Esophagus muscularis mucosa (tissue), 4 donors: ENCODE measurements at regions of chr6 and their contacts with region 1.

Region 1: DNA sequence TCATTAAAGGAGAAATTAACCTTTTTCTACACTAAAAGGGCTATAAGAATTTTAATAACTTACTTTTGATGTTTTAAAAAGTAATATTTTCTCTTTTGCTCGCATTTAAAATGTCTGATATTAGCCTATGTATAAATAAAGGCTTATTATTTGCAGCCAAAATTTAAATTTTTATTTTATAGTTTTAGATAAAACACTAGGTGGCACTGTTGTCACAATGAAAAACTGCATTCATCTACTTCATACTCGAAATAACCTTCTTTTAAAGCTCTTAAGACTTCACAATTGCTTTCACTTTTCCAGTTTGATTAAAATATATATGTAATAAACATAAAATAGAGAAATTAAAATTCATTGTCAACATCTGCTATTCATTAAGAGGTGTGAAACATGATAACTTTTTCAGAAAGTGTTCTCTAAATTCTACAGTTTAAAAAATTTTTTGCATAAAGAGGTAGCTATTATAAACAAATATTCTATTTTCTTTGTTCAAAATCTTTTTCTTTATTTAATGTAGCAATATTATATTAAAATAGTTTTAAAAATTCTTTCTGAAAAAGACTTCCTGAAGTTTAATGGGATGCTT is 78.8 kb upstream of the DEFB112 start:
- DNase-seq: no peak
- H3K4me3 ChIP-seq: no peak overlapping the region
- H3K27ac ChIP-seq: no peak overlapping the region
- H3K4me1 ChIP-seq: no peaks in the 10 kb centered on the region
- H3K27me3 ChIP-seq: no peaks in the 10 kb centered on the region
- CTCF ChIP-seq: peak; percentile 19 to 49 (median 48)
- EP300 ChIP-seq: no peak
- POLR2A ChIP-seq: no peak

Region 2: DNA sequence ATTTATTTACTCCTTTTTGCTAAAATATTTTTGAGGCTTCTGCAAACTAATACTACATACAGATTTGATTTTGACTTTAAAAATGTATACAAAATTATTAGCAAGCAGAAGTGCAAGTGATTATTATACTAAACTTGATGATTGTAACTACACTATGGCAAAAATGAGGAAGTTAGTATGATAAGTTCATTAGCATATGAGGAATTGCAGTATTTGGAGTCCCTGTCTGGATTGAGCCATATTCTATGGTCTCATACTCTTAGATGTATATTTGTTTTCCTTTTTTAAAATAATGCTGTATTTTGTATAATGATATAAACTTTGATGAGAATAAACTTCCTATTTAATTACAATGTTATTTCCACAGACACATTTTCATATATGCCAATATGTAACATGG is 398.3 kb before region 1 on chr6:
- intact Hi-C with region 1: no loop called
- DNase-seq: no peak
- H3K4me3 ChIP-seq: no peak overlapping the region
- H3K27ac ChIP-seq: no peak overlapping the region
- H3K4me1 ChIP-seq: no peaks in the 10 kb centered on the region
- H3K27me3 ChIP-seq: no peaks in the 10 kb centered on the region
- CTCF ChIP-seq: no peak
- EP300 ChIP-seq: no peak
- POLR2A ChIP-seq: no peak

Region 3: DNA sequence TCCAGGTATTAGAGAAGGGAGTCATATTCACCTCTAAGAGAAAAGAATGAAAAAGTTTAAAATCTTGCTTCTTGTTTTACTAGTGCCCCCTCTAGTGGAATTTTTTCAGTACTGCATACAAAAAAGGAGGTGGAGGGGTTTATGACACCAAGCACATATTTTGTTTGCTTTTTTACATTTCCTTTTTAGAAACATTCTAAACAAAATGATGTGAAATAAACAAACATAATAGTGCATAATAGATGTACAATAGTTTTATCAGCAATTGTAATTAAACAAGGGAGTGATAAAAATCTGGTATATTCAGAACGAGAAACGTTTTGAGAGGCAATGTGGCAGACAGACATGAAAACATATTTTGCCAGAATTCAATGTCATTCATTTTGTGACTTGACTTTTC is 473.8 kb after region 1 on chr6:
- intact Hi-C with region 1: loop called (anchors 5 kb)
- DNase-seq: no peak
- H3K4me3 ChIP-seq: no peak overlapping the region
- H3K27ac ChIP-seq: no peak overlapping the region
- H3K4me1 ChIP-seq: no peaks in the 10 kb centered on the region
- H3K27me3 ChIP-seq: no peaks in the 10 kb centered on the region
- CTCF ChIP-seq: peak; percentile 56 to 80 (median 79)
- EP300 ChIP-seq: no peak
- POLR2A ChIP-seq: no peak

Region 4: DNA sequence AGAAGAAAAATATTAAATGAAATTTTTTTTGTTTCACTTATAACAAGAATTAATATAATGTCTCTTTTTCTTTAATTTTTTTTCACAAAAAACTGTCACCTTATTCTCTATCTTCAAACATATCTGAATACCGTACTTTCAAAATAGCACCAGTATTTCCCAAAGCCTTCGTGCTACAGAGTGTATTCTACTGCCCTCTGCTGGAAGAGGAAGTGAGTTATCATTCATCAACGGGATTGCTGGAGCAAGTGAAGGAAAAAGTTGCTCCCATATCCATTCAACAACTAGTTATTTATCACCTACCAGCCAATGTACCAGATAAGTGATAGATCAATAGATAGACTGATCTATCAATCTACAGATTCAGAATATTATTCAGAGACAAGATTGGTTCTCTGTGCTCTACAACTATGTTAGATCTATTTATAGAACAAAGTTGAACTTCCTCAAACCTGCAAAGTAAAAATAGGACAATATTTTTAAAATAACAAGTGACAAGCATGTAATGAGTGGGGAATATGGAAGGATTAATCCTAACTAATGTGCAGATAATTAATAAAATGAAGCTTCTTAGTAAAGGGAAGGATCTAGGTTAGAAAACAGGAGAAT is 663.5 kb after region 1 on chr6:
- intact Hi-C with region 1: loop called (anchors 10 kb)
- DNase-seq: no peak
- H3K4me3 ChIP-seq: no peak overlapping the region
- H3K27ac ChIP-seq: no peak overlapping the region
- H3K4me1 ChIP-seq: no peaks in the 10 kb centered on the region
- H3K27me3 ChIP-seq: no peaks in the 10 kb centered on the region
- CTCF ChIP-seq: peak; percentile 40 to 71 (median 47)
- EP300 ChIP-seq: no peak
- POLR2A ChIP-seq: no peak